Gastrocnemius medialis (tissue), 4 donors: ENCODE measurements at regions of chr20 and their contacts with region 1.

Region 1: DNA sequence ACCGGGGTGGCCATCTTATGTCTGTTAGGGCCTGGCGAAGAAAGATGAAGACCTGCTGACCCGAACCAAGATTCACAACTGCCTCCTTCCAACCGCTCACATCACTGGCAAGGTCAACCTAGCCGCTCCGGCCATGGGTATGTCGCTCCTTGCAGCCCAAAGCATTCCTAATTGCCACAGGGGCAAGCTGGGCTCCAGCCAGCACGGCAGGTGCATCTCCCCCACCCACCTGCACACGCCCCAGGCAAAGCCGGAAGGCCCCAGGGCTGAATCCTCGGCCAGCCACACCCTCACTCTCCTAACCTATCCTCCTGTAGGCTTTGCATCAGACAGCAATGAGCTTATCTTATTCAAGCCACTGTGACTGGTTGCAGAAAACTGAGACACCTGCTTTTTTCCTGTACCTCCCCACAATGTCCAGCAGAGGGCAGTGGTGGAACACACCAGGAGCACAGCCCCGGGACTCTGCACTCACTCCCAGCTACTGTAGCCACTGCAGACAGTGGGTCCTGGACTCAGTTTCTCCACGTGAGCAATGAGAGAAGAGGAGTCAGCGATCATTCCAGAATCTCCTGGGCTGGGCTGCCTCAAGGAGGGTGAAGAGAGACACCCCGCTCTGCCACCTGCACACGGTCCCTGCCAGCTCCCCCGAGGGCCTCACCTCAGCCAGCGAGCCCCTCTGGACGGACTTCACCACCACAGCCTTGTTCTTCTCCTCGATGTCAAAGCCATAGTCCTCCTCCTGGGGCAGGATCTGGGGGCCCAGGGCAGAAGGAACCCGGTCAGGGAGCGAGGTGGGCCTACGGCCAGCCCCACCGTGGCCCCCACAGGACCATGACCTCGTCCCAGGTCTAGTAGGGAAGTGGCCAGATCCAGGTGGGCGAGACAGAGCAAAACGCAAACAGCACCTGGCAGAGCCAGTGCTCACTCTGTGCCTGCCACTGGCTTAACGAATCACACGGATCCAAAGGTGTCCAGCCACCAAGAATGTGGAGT is 170.0 kb downstream of the PREX1 start:
- DNase-seq: peak; percentile 54 to 63
- ATAC-seq: peak; percentile 76 to 85
- H3K4me3 ChIP-seq: no peak overlapping the region
- H3K27ac ChIP-seq: no peak overlapping the region
- H3K4me1 ChIP-seq: no peaks in the 10 kb centered on the region
- H3K27me3 ChIP-seq: no peaks in the 10 kb centered on the region
- CTCF ChIP-seq: peak; percentile 84 to 96 (median 93)
- POLR2A ChIP-seq: no peak

Region 2: DNA sequence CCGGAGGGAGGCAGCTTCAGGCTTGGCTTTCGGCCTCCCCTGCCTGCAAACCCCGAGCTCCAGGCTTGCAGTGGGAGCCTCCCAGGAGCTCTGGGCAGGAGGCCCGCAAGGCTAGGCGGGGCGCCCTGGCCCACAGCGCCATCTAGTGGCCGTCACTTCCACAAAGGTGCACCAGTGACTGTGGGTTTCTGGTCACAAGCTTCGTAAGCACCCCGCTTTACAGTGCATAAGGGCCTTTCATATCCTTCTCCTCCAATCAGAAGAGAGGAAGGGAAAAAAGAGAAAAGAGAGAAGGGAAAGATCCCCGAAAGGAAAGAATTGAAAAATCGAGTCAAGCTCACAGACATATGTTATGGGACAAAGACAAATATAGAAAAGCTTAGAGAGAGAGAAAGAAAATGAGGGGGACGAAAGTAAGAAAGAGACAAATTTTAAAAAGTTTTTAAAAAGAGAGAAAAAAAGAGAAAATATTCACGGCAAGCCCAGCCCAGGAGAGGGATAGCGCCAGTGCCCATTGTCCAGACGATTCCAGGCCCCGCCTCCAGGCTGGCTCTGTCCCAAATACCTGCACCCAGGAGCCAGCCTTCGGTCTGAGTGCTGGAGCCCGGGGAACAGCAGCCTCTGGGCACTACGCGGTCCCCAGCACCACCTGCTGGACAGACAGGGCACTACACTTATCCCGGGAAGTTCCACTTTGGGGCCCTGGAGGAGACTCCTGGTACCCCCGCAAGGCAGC is 37.1 kb before region 1 on chr20:
- in situ Hi-C with region 1: no loop called
- intact Hi-C with region 1: no loop called
- DNase-seq: peak; percentile 51 to 78
- ATAC-seq: peak; percentile 87 to 90
- H3K4me3 ChIP-seq: peak overlapping the region; percentile 2 to 33 (median 16)
- H3K27ac ChIP-seq: no peak overlapping the region
- H3K4me1 ChIP-seq: peaks cover 5 to 11% of the 10 kb centered on the region in 2 donors
- H3K27me3 ChIP-seq: no peaks in the 10 kb centered on the region
- CTCF ChIP-seq: peak; percentile 83 to 90 (median 86)
- POLR2A ChIP-seq: no peak

Region 3: GRCh38 chr20:48644283-48644828 is 13.4 kb before region 1 on chr20:
- in situ Hi-C with region 1: no loop called
- intact Hi-C with region 1: no loop called
- DNase-seq: no peak
- ATAC-seq: no peak
- H3K4me3 ChIP-seq: no peak overlapping the region
- H3K27ac ChIP-seq: no peak overlapping the region
- H3K4me1 ChIP-seq: no peaks in the 10 kb centered on the region
- H3K27me3 ChIP-seq: no peaks in the 10 kb centered on the region
- CTCF ChIP-seq: no peak
- POLR2A ChIP-seq: no peak

Region 4: DNA sequence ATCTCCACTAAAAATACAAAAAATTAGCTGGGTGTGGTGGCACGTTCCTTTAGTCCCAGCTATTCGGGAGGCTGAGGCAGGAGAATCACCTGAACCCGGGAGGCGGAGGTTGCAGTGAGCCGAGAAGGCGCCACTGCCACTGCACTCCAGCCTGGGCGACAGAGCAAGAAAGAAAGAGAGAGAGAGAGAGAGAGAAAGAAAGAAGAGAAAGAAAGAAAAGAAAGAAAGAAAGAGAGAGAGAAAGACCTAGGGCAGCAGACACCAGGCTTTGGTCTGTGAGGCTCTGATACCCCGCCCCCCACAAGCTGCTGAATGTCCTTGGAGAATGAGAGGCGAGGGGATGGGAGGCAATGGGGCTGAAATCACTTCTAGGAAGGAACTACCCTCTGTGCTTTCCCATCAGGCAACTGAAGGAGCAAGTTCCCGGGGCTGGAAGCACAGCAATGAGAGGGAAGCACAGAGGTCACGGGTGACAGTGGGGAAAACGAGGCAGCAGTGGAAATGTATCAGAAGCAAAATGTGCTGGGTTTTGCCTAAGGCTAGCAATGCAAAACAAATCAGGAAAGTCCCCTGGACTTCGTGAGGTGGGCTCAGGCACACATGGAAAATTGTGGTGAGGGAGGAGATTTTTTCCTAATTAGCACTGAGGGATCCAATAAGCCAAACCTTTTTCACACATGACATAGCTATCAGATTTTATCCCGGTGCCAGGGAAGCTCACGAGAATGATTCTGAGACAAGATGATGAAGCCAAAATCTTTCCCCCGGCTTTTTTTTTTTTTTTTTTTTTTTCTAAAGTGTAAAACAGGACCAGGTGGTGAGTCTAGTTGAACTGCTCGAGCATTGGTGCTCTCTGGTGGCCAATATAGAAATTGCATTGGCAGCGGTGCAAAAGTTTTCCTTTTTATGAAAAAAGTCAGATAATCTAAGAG is 246.9 kb after region 1 on chr20:
- in situ Hi-C with region 1: loop called (anchors 5 kb)
- intact Hi-C with region 1: loop called (anchors 1 kb)
- DNase-seq: peak in 1 of 2 donors; percentile 29
- ATAC-seq: peak; percentile 45 to 64
- H3K4me3 ChIP-seq: no peak overlapping the region
- H3K27ac ChIP-seq: no peak overlapping the region
- H3K4me1 ChIP-seq: no peaks in the 10 kb centered on the region
- H3K27me3 ChIP-seq: no peaks in the 10 kb centered on the region
- CTCF ChIP-seq: peak; percentile 79 to 85 (median 84)
- POLR2A ChIP-seq: no peak